ENCODE measurements at regions of chr16 and their contacts with region 1.

Region 1: DNA sequence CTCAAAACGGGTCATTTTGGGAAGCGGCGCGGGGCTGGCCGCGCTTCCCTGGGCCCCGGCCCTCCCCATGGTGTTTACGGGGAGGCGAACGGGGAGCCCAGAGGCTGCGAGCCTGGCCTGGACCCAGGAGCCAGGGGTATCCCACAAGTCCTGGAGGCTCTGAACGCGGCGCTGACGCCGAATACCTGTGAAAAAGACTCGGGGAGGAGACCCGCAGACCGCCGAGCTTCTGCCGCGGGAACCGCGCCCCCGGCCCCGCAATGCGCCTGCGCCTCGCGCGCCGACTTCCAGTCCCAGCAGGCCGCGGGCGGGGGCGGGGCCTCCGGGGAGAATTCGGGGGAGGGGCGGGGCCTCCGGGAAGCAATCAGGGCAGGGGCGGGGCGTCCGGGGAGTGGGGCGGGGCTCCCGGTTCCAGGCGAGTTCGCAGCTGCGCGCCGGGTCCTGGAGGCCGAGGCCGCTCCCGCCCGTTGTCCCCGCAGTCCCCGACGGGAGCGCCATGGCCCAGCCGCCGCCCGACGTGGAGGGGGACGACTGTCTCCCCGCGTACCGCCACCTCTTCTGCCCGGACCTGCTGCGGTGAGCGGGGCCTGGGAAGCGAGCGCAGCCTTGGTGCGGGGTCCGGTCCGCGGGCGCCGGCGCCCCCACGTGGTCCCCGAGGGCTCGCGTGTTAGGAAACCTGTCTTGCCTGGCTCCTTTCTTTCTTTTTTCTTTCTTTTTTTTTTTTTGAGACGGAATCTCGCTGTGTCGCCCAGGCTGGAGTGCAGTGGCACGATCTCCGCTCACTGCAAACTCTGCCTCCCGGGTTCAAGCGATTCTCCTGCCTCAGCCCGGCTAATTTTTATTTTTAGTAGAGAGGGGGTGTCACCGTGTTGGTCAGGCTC is at the start of gene DECR2:
- DNase-seq: peak; percentile 95
- ATAC-seq: peak; percentile 86
- H3K4me3 Mint-ChIP-seq: peak within 1 kb of the TSS; percentile 93
- H3K27ac Mint-ChIP-seq: peak within 1 kb of the TSS; percentile 98
- H3K4me1 Mint-ChIP-seq: peaks cover 24% of the 10 kb centered on the region
- H3K27me3 Mint-ChIP-seq: no peaks in the 10 kb centered on the region
- CTCF ChIP-seq: no peak
- total RNA-seq, gene DECR2: 4.4 and 6.7 TPM in 2 replicates

Region 2: GRCh38 chr16:234468-235305 is 167.0 kb before region 1 on chr16 and contains the start of gene FAM234A:
- CTCF ChIA-PET with region 1: no interaction called
- POLR2A ChIA-PET with region 1: interaction called, 4 read pairs
- intact Hi-C with region 1: loop called (anchors 1 kb)
- DNase-seq: peak; percentile 98
- ATAC-seq: peak; percentile 85
- H3K4me3 Mint-ChIP-seq: peak within 1 kb of the TSS; percentile 98
- H3K27ac Mint-ChIP-seq: peak within 1 kb of the TSS; percentile 99
- H3K4me1 Mint-ChIP-seq: peaks cover 18% of the 10 kb centered on the region
- H3K27me3 Mint-ChIP-seq: no peaks in the 10 kb centered on the region
- CTCF ChIP-seq: no peak
- total RNA-seq, gene FAM234A: 45.9 and 49.6 TPM in 2 replicates

Region 3: DNA sequence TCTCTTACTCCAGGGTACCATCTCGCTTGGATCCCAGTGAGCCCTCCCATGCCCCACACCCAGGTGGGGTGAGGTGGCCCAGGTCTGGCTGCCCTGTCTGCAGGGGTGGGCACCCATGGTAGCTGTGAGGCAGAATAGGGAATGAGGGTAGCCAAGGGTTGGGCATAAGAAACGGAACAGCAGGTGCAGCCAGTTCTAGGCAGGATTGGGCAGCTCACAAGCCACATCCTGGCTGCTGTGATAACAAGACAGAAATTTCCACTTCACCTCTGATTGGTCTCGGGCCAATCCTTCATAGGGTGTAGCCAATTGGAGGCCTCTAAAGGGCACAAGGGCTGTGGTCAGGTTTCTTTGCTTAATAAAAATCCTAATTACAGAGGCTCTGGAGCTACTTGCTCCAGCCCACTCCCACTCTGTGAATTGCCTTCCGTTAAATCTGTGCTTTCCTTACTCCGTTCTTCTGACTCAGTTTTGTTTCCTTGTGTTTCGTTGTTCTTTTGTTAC is 122.8 kb before region 1 on chr16:
- CTCF ChIA-PET with region 1: no interaction called
- POLR2A ChIA-PET with region 1: no interaction called
- intact Hi-C with region 1: no loop called
- DNase-seq: no peak
- ATAC-seq: no peak
- H3K4me3 Mint-ChIP-seq: no peak overlapping the region
- H3K27ac Mint-ChIP-seq: no peak overlapping the region
- H3K4me1 Mint-ChIP-seq: peaks cover 6% of the 10 kb centered on the region
- H3K27me3 Mint-ChIP-seq: peaks cover 17% of the 10 kb centered on the region
- CTCF ChIP-seq: no peak

Region 4: GRCh38 chr16:370443-370842 is 31.3 kb before region 1 on chr16 and contains the start of gene MRPL28:
- CTCF ChIA-PET with region 1: interaction called, 3 read pairs
- POLR2A ChIA-PET with region 1: interaction called, 29 read pairs
- intact Hi-C with region 1: loop called (anchors 1 kb)
- DNase-seq: peak; percentile 88
- ATAC-seq: peak; percentile 99
- H3K4me3 Mint-ChIP-seq: peak within 1 kb of the TSS; percentile 93
- H3K27ac Mint-ChIP-seq: peak within 1 kb of the TSS; percentile 91
- H3K4me1 Mint-ChIP-seq: peaks cover 13% of the 10 kb centered on the region
- H3K27me3 Mint-ChIP-seq: no peaks in the 10 kb centered on the region
- CTCF ChIP-seq: no peak
- total RNA-seq, gene MRPL28: 82.4 and 87.3 TPM in 2 replicates

Region 5: DNA sequence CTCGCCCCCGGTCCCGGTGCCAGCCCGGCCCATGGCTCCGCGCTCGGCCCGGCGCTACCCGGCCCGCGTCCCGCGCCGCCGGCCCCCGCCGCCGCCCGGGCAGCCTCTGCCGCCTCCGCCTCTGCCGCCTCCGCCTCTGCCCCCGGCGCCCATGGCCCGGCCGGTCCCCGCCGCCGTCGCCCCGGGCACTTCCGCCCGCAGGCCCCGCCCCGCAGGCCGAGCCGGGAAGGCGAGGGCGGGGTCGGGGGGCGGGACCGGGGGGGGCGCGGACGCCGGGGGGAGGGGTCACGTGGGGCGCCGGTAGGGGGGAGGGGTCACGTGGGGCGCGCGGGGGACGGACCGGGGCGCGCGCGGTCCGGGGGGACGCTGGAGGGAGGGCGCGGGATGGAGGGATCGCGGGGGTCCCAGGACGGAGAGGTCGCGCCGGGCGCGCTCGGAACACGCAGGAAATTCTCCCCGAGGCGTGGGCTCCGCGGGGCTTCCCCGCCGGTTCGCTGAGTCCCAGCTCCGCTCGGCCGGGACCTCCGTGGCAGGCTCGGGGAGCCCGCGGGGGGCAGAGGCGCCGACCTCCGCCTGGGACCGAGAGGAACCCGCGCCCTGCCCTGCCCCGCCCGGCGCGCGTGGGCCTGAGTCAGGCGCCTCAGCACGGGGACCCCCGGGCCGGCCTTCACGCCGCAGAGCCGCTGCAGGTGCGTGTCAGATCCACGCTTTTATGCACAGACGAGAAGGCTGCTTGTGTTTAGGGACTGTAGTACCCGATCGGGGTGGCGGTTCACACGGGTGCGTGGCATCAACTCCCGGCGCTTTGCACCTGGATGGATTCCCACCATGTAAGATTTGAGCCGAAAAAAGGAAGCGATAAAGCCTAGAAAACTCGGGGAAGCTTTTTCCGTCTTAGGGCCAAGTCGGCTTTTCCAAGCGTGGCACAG is 19.7 kb before region 1 on chr16 and contains the start of gene PGAP6:
- CTCF ChIA-PET with region 1: interaction called, 4 read pairs
- POLR2A ChIA-PET with region 1: interaction called, 54 read pairs
- intact Hi-C with region 1: loop called (anchors 1 kb)
- DNase-seq: peak; percentile 73
- ATAC-seq: peak; percentile 67
- H3K4me3 Mint-ChIP-seq: peak within 1 kb of the TSS; percentile 89
- H3K27ac Mint-ChIP-seq: peak within 1 kb of the TSS; percentile 78
- H3K4me1 Mint-ChIP-seq: peaks cover 33% of the 10 kb centered on the region
- H3K27me3 Mint-ChIP-seq: no peaks in the 10 kb centered on the region
- CTCF ChIP-seq: no peak
- total RNA-seq, gene PGAP6: 38.4 and 44.5 TPM in 2 replicates

Region 6: DNA sequence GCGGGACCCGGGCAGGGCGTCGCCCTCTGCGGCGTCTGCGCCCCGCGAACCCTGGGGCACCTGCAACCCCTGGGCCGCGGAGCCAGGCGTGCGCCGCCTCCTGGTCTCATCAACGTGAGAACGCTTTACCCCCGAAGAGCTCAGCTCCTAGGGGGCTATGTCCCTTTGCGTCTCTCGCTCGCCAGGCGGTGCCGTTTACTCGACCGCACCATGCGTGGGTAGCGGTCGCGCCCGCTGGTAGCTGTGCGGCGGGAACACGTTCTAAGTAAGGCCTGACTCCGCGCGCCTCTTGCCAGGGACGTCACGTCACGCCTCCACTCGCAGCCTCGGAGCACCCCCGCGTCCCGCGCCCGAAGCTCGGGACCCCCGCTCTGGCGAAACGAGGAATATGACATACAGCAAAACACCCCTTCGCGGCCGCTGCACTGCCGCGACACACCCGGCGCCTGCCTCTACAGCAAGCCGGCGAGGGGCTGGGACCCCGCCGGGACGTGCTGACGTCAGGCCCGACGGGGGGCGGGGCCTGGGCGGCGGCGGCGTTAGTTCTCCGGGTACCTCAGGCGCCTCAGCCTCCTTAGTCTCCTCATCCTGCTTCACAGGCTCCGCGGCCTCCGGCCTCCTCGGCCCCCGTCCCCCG is 23.5 kb after region 1 on chr16 and contains the start of gene RAB11FIP3:
- CTCF ChIA-PET with region 1: interaction called, 7 read pairs
- POLR2A ChIA-PET with region 1: interaction called, 10 read pairs
- intact Hi-C with region 1: loop called (anchors 1 kb)
- DNase-seq: peak; percentile 93
- ATAC-seq: peak; percentile 92
- H3K4me3 Mint-ChIP-seq: peak within 1 kb of the TSS; percentile 89
- H3K27ac Mint-ChIP-seq: peak within 1 kb of the TSS; percentile 82
- H3K4me1 Mint-ChIP-seq: peaks cover 30% of the 10 kb centered on the region
- H3K27me3 Mint-ChIP-seq: no peaks in the 10 kb centered on the region
- CTCF ChIP-seq: no peak
- total RNA-seq, gene RAB11FIP3: 32.2 and 35.4 TPM in 2 replicates

Region 7: GRCh38 chr16:589658-590159 is 188.0 kb after region 1 on chr16 and contains the start of gene RAB40C:
- CTCF ChIA-PET with region 1: no interaction called
- POLR2A ChIA-PET with region 1: no interaction called
- intact Hi-C with region 1: loop called (anchors 5 kb)
- DNase-seq: peak; percentile 96
- ATAC-seq: peak; percentile 86
- H3K4me3 Mint-ChIP-seq: peak within 1 kb of the TSS; percentile 99
- H3K27ac Mint-ChIP-seq: peak within 1 kb of the TSS; percentile 100
- H3K4me1 Mint-ChIP-seq: peaks cover 42% of the 10 kb centered on the region
- H3K27me3 Mint-ChIP-seq: no peaks in the 10 kb centered on the region
- CTCF ChIP-seq: no peak
- total RNA-seq, gene RAB40C: 10.5 and 13.1 TPM in 2 replicates